ENCODE measurements at regions of chr12 and their contacts with region 1.

Region 1: GRCh38 chr12:14167005-14167628 is 185.7 kb upstream of the GRIN2B start:
- DNase-seq: no peak
- H3K4me3 ChIP-seq: no peak overlapping the region
- H3K27ac ChIP-seq: no peak overlapping the region
- H3K4me1 ChIP-seq: peaks cover 0 to 6% (median 0%) of the 10 kb centered on the region in 6 donors
- H3K27me3 ChIP-seq: peaks cover 0 to 5% (median 0%) of the 10 kb centered on the region in 7 donors
- CTCF ChIP-seq: peak; percentile 42 to 92 (median 83)
- POLR2A ChIP-seq: no peak

Region 2: GRCh38 chr12:13350946-13351345 is 816.2 kb before region 1 on chr12:
- intact Hi-C with region 1: loop called (anchors 10 kb)
- DNase-seq: no peak
- H3K4me3 ChIP-seq: no peak overlapping the region
- H3K27ac ChIP-seq: no peak overlapping the region
- H3K4me1 ChIP-seq: no peaks in the 10 kb centered on the region
- H3K27me3 ChIP-seq: peaks cover 0 to 17% (median 0%) of the 10 kb centered on the region in 7 donors
- CTCF ChIP-seq: no peak
- POLR2A ChIP-seq: no peak

Region 3: GRCh38 chr12:13744561-13744960 is 422.6 kb before region 1 on chr12:
- intact Hi-C with region 1: loop called (anchors 5 kb)
- DNase-seq: no peak
- H3K4me3 ChIP-seq: no peak overlapping the region
- H3K27ac ChIP-seq: no peak overlapping the region
- H3K4me1 ChIP-seq: peaks cover 0 to 3% (median 0%) of the 10 kb centered on the region in 6 donors
- H3K27me3 ChIP-seq: peaks cover 0 to 19% (median 0%) of the 10 kb centered on the region in 7 donors
- CTCF ChIP-seq: no peak
- POLR2A ChIP-seq: no peak

Region 4: DNA sequence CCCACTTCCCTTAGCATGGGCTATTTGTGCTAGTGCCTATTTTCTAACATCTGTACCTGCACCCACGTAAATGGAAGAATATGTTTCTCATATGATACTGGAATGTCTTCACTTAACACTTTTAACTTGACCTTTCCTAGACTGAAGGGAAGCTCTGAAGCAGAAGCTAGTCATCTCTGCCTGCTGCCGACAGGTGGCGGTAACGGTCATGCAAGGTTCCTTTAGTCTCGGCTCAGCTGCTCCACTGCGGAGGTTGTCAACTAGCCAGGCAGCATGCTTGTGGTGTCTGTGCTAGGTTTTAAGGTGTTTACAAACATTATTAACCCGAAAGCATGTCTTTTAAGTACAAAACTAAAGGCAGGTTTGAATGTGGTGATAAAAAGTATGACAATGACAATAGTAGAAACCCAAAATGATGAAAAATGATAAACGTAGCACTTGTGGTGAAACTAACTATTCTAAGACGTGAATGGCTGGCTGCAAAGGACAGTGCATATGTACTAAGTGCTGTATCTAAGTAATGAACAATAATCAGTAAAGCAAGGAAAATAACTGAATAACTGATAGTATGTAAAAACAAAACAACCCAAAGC is 302.9 kb before region 1 on chr12:
- intact Hi-C with region 1: loop called (anchors 2 kb)
- DNase-seq: peak; percentile 86
- H3K4me3 ChIP-seq: no peak overlapping the region
- H3K27ac ChIP-seq: no peak overlapping the region
- H3K4me1 ChIP-seq: no peaks in the 10 kb centered on the region
- H3K27me3 ChIP-seq: peaks cover 0 to 27% (median 0%) of the 10 kb centered on the region in 7 donors
- CTCF ChIP-seq: peak; percentile 32 to 84 (median 67)
- POLR2A ChIP-seq: no peak

Measured in spleen (tissue), 13 donors.